ENCODE measurements at regions of chr1 and their contacts with region 1.

Region 1: DNA sequence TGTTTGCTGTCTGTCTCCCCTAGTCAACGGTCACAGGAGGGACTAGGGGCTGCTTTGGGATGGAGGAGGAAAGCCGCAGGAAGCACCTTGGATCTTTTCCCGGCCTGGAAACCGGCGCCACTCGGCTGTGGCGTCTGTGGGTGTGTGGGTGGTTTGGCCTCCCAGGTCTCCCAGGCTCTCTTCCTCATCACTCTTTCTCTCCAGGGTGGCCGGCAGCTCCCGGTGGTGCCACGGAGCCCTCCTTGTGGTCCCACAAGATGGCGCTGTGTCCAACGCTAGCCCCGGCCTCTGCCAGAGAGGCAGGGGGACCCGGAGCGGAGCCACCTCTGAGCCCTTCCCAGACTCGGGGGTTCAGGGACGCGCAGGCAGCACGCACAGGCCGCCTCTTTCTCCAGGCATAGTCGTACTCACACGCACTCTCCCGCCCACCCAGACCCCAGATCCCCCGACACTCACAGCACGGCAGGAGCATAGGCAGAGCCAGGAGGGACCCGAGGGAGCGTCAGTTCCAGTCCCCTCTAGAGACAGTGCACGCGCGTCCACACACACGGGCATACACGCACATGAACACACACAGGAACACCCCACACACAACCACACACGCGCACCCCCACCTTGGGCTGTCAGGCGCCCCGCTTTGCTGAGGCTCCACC is 31.2 kb downstream of the CDCP2 start:
- DNase-seq: peak; percentile 64 to 84
- ATAC-seq: peak; percentile 81 to 95
- H3K4me3 ChIP-seq: 0 out of 3 replicates have a peak overlapping the region, but pooled peaks have one; percentile 31
- H3K27ac ChIP-seq: peak overlapping the region; percentile 79 to 85
- H3K4me1 ChIP-seq: peaks cover 26% of the 10 kb centered on the region
- CTCF ChIP-seq: peak; percentile 62
- EP300 ChIP-seq: no peak
- POLR2A ChIP-seq: no peak
- RAD21 ChIP-seq: peak; percentile 64 to 75

Region 2: GRCh38 chr1:54132495-54132894 is 10.9 kb after region 1 on chr1:
- CTCF ChIA-PET with region 1: interaction called, 14 read pairs
- POLR2A ChIA-PET with region 1: no interaction called
- DNase-seq: no peak
- ATAC-seq: no peak
- H3K4me3 ChIP-seq: no peak overlapping the region
- H3K27ac ChIP-seq: no peak overlapping the region
- H3K4me1 ChIP-seq: 0 out of 3 replicates have a peak, but pooled peaks cover 3% of the 10 kb centered on the region
- CTCF ChIP-seq: no peak
- EP300 ChIP-seq: no peak
- POLR2A ChIP-seq: no peak
- RAD21 ChIP-seq: no peak

Region 3: DNA sequence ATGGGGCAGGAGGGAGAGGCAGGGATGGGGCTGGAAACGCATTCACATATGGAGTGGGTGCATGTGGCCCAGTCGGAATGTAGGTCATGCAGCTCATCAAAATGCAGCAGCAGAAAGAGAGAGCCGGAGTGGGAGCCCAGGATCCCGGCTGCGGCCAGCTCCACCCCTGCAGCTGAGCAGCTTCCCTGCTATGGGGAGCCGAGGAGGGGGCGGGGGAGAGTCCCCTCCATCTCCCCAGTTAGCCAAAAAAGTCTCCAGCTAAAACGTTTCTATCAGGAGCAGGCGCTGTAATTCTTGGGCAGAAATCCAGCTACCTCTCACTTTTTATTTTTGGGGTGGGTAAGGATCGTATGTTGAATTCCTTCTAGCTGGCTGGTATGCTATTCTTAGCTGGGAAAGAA is 118.0 kb after region 1 on chr1:
- CTCF ChIA-PET with region 1: no interaction called
- POLR2A ChIA-PET with region 1: no interaction called
- DNase-seq: no peak
- ATAC-seq: no peak
- H3K4me3 ChIP-seq: no peak overlapping the region
- H3K27ac ChIP-seq: no peak overlapping the region
- H3K4me1 ChIP-seq: no peaks in the 10 kb centered on the region
- CTCF ChIP-seq: no peak
- EP300 ChIP-seq: no peak
- POLR2A ChIP-seq: no peak
- RAD21 ChIP-seq: no peak

Measured in A549 (cell line).